IMR-90 (cell line): ENCODE measurements at regions of chr1 and their contacts with region 1.

Region 1: DNA sequence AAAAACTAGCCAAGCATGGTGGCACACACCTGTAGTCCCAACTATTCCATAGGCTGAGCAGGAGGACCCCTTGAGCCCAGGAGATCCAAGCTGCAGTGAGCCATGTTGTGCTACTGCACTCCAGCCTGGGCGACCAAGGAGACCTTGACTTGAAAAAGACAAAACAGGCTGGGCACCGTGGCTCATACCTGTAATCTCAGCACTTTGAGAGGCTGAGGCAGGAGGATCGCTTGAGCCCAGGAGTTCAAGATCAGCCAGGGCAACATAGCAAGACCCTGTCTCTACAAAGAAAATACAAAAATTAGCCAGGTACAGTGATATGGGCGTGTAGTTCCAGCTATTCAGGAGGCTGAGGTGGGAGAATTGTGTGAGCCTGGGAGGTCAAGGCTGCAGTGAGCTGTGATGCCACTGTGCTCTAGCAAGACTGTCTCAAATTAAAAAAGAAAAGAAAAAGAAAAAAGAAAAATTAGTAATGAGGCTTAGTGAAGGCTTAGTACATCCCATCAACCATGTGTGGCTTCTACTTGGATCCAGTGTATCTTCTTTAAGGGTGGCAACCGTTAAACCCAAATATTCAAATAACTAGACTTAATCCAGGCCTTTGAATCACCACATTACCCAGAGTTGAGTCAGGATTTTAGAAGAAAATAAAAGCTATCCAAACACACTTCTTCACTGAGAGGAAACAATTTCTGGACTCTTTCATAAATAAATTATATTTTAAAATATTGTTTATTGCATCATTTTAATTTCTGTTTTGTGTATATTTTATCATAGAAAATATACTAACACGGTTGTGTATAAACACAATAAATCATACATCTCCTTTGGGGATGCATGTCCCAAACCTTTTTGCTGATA is 74.3 kb upstream of the RAB4A start:
- DNase-seq: peak; percentile 54
- ATAC-seq: peak; percentile 90
- H3K4me3 ChIP-seq: no peak overlapping the region
- H3K27ac ChIP-seq: peak overlapping the region; percentile 84
- H3K4me1 ChIP-seq: peaks cover 14% of the 10 kb centered on the region
- H3K27me3 ChIP-seq: no peaks in the 10 kb centered on the region
- CTCF ChIP-seq: no peak
- POLR2A ChIP-seq: no peak
- RAD21 ChIP-seq: no peak

Region 2: GRCh38 chr1:229221104-229222019 is 24.7 kb after region 1 on chr1:
- CTCF ChIA-PET with region 1: no interaction called
- POLR2A ChIA-PET with region 1: no interaction called
- dilution Hi-C with region 1: no loop called
- in situ Hi-C with region 1: no loop called
- intact Hi-C with region 1: loop called (anchors 1 kb)
- DNase-seq: peak; percentile 36
- ATAC-seq: peak; percentile 19; the same call in 1 of the 2 replicates
- H3K4me3 ChIP-seq: no peak overlapping the region
- H3K27ac ChIP-seq: peak overlapping the region; percentile 11; the same call in 1 of the 2 replicates
- H3K4me1 ChIP-seq: peaks cover 8% of the 10 kb centered on the region
- H3K27me3 ChIP-seq: no peaks in the 10 kb centered on the region
- CTCF ChIP-seq: no peak
- POLR2A ChIP-seq: no peak
- RAD21 ChIP-seq: no peak